K562 (cell line): ENCODE measurements at regions of chr2 and their contacts with region 1.

Region 1: DNA sequence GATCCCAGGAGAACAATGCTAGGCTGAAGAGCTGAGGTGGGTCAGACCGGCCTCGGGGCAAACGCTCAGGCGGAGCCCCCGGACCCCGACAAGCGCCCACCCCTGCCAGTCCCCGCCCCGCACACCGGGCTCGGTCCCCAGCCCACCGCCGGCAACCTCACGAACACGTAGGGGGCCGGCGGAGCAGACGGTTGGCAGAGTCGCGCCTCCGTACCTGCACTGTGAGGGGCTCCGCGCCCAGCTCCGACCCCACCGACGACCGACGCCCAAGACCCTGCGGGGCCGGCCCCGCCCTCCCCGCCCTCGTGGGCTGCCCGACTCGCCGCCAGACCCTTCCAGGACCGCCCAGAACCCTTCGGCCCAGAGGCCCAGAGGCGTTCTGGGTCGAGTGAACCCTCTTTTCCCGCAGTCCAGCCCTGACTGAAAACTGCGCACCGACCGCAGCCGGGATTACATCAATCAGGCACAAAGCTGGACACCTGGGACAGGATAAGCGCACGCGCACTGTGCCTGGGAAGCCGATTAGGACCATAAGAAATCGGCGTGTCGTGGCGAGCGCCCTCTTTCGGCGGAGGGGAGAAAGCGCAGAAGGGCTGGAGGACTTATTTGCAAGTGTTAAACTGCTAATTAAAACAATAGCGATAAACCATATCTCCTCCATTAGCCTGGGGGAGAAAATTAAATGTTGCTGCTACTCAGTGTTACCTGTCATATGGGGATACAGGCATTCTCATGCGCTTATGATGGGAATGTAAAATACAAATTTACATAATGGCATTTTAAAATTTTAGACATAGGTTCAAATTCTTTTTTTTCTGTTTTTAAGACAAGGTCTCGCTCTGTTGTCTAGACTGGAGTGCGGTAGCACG is 11.7 kb upstream of the DCTN1 start:
- DNase-seq: peak; percentile 90 to 96 (median 92)
- ATAC-seq: peak; percentile 93
- H3K4me3 ChIP-seq: peak overlapping the region; percentile 66
- H3K27ac ChIP-seq: peak overlapping the region; percentile 91
- H3K4me1 ChIP-seq: peaks cover 3 to 17% of the 10 kb centered on the region in 2 experiments; a peak in 3 of 5 replicates
- H3K27me3 ChIP-seq: no peaks in the 10 kb centered on the region
- CTCF ChIP-seq: peak; percentile 82 to 99 (median 99)
- EP300 ChIP-seq: no peak
- POLR2A ChIP-seq: peak; percentile 55; the same call in 1 of the 2 replicates
- RAD21 ChIP-seq: peak; percentile 57 to 62

Region 2: DNA sequence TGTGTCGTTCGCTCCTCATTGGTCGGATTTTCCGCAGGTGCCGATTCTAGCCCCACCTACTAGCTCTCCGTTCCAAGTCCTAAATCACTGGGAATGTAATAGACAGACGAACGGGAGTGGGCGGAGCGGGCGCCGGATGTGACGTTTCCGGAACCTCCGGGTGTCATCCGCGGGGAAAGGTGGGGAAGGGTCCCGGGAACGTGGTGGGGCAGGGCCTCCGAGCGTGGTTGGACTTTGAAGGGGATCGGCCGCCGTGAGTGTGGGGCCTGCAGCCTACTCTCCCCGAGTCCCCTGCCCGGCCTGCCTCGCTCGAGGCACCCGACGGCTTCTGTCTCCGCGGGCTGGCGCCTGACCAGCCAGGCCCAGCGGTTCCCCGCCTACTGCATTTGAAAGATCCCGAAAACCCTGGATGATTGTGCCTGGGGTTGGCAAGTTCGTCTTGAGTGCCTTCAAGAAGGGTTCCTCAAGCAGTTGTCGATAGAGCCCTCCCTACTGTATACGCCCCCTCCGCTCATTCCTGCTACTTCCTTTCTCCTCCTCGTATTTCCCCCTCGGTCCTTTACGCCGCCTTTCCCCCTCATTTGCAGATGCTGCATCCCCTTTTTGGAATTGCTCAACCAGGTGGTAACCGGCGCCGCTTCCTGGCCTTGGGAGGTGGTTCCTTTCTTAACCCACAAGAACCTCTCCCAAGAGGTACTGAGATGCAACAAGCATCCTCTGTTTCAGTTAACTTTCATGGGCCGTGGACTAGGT is 562.8 kb before region 1 on chr2 and contains the start of gene STAMBP:
- CTCF ChIA-PET with region 1: no interaction called
- POLR2A ChIA-PET with region 1: no interaction called
- in situ Hi-C with region 1: no loop called
- intact Hi-C with region 1: loop called (anchors 10 kb)
- DNase-seq: peak; percentile 95 to 98 (median 96)
- ATAC-seq: peak; percentile 95
- H3K4me3 ChIP-seq: peak within 1 kb of the TSS; percentile 62
- H3K27ac ChIP-seq: peak within 1 kb of the TSS; percentile 89
- H3K4me1 ChIP-seq: peaks cover 7 to 13% of the 10 kb centered on the region in 2 experiments; a peak in 4 of 5 replicates
- H3K27me3 ChIP-seq: no peaks in the 10 kb centered on the region
- CTCF ChIP-seq: no peak
- EP300 ChIP-seq: no peak
- POLR2A ChIP-seq: peak; percentile 89
- RAD21 ChIP-seq: no peak
- polyA plus RNA-seq, gene STAMBP: 50.1 to 75.2 TPM

Region 3: DNA sequence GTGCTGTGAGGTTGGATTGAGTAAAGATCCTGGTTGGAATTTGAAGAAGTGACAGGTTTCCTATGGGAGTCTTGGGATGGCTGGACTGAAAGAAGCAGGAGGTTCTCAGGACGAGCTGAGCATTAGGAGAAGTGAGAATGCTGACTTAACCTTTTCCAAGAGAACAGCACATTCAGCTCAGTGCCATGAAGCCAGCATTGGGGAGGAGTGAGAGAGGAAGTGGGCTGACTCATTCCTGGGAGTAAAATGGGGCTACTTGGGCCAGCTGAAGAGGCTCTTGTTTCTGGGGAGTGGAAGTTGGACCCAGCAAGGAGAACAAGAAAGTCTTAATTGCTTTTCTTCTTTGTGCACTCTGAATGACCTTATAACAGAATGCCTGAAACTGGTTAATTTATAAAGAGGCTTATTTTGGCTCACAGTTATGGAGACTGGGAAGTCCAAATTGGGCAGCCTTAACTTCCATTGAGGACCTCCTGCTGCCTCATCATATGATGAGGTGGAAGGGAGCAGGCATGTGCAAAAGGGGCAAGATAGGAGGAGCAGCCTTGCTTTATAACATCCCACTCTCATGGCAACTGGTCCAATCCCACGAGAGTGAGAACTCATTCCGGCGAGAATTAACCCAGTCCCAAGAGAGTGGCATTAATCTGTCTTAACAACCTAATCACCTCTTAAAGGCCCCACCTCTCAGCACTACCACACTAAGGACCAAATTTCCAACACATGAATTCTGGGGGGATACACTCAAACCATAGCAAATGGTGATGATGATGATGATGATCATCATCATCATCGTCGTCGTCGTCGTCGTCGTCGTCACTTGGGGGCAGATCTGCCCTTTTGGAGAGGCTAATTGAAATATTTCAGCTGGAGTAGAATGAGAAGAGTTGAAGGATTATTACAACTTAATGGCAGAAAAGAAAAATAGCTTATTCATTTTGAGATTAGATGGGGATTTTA is 439.0 kb before region 1 on chr2:
- CTCF ChIA-PET with region 1: no interaction called
- POLR2A ChIA-PET with region 1: no interaction called
- in situ Hi-C with region 1: no loop called
- intact Hi-C with region 1: no loop called
- DNase-seq: no peak
- ATAC-seq: no peak
- H3K4me3 ChIP-seq: no peak overlapping the region
- H3K27ac ChIP-seq: no peak overlapping the region
- H3K4me1 ChIP-seq: no peaks in the 10 kb centered on the region; a peak in 1 of 5 replicates
- H3K27me3 ChIP-seq: no peaks in the 10 kb centered on the region
- CTCF ChIP-seq: no peak
- EP300 ChIP-seq: no peak
- POLR2A ChIP-seq: no peak
- RAD21 ChIP-seq: no peak

Region 4: DNA sequence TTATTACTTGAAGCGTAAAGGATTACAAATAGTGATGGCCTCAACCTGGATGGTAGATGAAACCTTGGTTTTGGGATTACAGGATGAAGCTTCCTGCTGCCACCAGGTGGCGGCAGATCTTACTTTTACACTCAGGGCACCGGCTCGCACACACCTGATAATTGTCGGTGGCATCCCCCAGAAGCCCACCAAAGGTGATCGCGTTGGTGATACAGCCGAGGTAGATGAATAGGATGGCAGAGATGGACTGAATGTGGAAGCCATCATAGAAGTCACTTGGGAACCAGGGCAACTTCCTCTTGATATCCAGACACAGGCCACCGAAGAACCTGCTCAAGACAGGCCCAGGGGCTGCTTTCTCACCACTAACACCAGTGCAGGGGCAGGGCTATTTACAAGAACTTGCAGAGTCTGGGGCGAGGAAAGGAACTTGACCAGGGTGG is 141.6 kb before region 1 on chr2:
- CTCF ChIA-PET with region 1: no interaction called
- POLR2A ChIA-PET with region 1: no interaction called
- in situ Hi-C with region 1: no loop called
- intact Hi-C with region 1: loop called (anchors 5 kb)
- DNase-seq: peak; percentile 72 to 76 (median 75)
- ATAC-seq: peak; percentile 88
- H3K4me3 ChIP-seq: no peak overlapping the region
- H3K27ac ChIP-seq: no peak overlapping the region
- H3K4me1 ChIP-seq: peaks cover 0 to 3% of the 10 kb centered on the region in 2 experiments; a peak in 2 of 5 replicates
- H3K27me3 ChIP-seq: peaks cover 9 to 40% of the 10 kb centered on the region in 2 experiments; a peak in 4 of 5 replicates
- CTCF ChIP-seq: peak; percentile 75 to 87 (median 86)
- EP300 ChIP-seq: no peak; the same call in 1 of the 2 replicates
- POLR2A ChIP-seq: no peak
- RAD21 ChIP-seq: peak; percentile 72 to 89

Region 5: GRCh38 chr2:74267068-74267467 is 124.7 kb before region 1 on chr2:
- CTCF ChIA-PET with region 1: interaction called, 4 read pairs
- POLR2A ChIA-PET with region 1: no interaction called
- in situ Hi-C with region 1: no loop called
- intact Hi-C with region 1: loop called (anchors 5 kb)
- DNase-seq: peak; percentile 61 to 74 (median 67)
- ATAC-seq: peak; percentile 92
- H3K4me3 ChIP-seq: no peak overlapping the region
- H3K27ac ChIP-seq: no peak overlapping the region
- H3K4me1 ChIP-seq: peaks cover 6 to 9% of the 10 kb centered on the region in 2 experiments; a peak in 3 of 5 replicates
- H3K27me3 ChIP-seq: no peaks in the 10 kb centered on the region
- CTCF ChIP-seq: peak; percentile 71 to 80 (median 72)
- EP300 ChIP-seq: 0 out of 2 replicates have a peak, but pooled peaks have one; percentile 20
- POLR2A ChIP-seq: no peak
- RAD21 ChIP-seq: peak; percentile 72 to 87

Region 6: DNA sequence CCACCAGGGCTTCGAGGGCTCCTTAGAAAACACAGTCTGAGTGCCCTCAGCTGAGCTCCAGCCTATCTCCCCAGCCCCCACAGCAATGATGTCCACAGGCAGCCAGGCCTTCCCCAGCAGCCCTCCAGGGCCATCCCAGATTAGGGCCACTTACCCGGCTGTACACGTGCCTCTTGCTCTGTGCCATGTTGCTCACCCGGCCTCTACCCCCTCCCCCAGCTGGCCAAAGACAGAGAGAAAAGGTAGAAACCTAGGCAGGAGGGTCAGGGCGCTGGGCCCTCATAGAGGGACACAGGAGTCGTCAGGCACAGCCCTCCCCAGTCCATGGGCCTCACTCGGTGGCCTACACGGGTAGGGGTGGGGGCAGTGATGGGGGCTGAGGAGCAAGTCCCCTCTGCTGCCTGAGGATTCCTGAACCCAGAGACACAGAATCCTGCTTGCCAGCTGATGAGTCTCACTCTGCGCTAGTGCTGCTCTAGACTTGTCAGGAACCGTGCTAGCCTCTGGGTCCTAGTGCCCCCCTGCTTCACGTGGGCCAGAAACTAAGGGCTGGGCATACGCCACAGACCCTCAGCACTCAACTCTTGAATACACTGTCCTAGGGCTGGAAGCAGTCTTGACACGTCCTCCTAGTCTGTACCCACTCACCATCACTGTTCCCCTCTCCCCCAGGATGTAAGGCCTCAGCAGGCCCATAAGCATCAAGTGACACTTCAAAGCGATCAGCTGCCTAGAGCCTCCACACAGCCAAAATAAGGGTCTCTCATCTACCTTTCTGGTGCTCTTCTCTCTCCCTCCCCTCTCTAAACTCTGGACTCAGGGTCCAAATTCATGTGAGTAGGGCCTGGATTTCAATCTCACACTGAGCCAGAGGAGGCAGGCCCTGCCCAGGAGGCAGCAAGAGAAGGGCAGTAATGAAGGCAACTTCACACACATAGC is 11.7 kb before region 1 on chr2 and contains the start of gene DCTN1:
- CTCF ChIA-PET with region 1: no interaction called
- POLR2A ChIA-PET with region 1: interaction called, 13 read pairs
- in situ Hi-C with region 1: no loop called
- intact Hi-C with region 1: no loop called
- DNase-seq: peak; percentile 43 to 52 (median 48)
- ATAC-seq: peak; percentile 96
- H3K4me3 ChIP-seq: no peak within 1 kb of the TSS
- H3K27ac ChIP-seq: no peak within 1 kb of the TSS
- H3K4me1 ChIP-seq: peaks cover 8 to 16% of the 10 kb centered on the region in 2 experiments; a peak in 4 of 5 replicates
- H3K27me3 ChIP-seq: no peaks in the 10 kb centered on the region
- CTCF ChIP-seq: no peak
- EP300 ChIP-seq: no peak
- POLR2A ChIP-seq: no peak
- RAD21 ChIP-seq: no peak
- polyA plus RNA-seq, gene DCTN1: 23.9 to 28.6 TPM

Region 7: GRCh38 chr2:74436798-74437695 is 45.2 kb after region 1 on chr2:
- CTCF ChIA-PET with region 1: no interaction called
- POLR2A ChIA-PET with region 1: no interaction called
- in situ Hi-C with region 1: no loop called
- intact Hi-C with region 1: no loop called
- DNase-seq: peak in 1 of 4 experiments; percentile 43
- ATAC-seq: no peak
- H3K4me3 ChIP-seq: no peak overlapping the region
- H3K27ac ChIP-seq: no peak overlapping the region
- H3K4me1 ChIP-seq: peaks cover 16 to 42% of the 10 kb centered on the region in 2 experiments; a peak in 4 of 5 replicates
- H3K27me3 ChIP-seq: no peaks in the 10 kb centered on the region
- CTCF ChIP-seq: no peak
- EP300 ChIP-seq: no peak
- POLR2A ChIP-seq: no peak
- RAD21 ChIP-seq: no peak